HepG2 (cell line): ENCODE measurements at regions of chr18 and their contacts with region 1.

Region 1: DNA sequence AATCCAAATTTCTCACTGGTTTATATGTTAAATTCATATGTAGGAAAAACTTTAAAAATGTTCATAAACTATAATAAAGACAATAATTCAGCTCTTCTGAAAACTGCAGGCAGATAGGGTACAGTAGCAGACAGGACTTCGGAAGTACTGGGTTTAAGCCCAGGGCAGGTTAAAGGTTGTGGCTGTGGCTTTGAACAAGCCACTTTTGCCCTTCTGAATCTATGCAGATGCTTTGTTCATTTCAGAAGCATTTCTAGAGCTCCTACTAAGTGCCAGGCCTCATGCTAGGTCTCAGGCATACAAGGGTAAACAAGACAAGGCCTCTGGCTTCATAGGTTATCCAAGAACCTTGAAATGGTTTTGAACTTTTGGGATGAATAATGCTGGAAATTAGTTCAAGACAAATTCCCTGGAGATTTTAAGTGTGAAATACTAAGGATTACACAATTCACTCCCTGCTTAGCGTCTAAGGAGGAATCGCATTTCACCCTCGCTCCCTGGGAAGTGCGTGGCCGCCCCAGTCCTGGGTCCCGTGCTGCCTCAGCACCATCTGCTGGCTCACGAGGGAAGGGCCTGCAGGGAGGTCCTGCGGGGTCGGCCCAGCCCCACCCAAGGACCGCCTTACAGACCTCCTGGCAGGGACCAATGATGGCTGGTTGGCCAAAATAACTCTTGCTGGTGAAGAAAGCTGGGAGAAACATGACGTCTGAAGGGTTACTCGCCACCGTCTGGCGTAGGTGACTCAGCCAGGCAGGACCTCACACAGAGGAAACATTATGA is 67.7 kb upstream of the L3MBTL4 start:
- DNase-seq: peak; percentile 38
- ATAC-seq: peak; percentile 100
- H3K4me3 ChIP-seq: peak overlapping the region in 1 of 3 experiments; percentile 37; a peak in 2 of 6 replicates
- H3K27ac ChIP-seq: no peak overlapping the region
- H3K4me1 ChIP-seq: peaks cover 25% of the 10 kb centered on the region
- H3K27me3 ChIP-seq: peaks cover 0 to 12% of the 10 kb centered on the region in 2 experiments; a peak in 1 of 5 replicates
- CTCF ChIP-seq: peak; percentile 98
- EP300 ChIP-seq: no peak
- POLR2A ChIP-seq: no peak
- RAD21 ChIP-seq: peak; percentile 94

Region 2: GRCh38 chr18:5868218-5869115 is 613.9 kb before region 1 on chr18:
- CTCF ChIA-PET with region 1: interaction called, 5 read pairs
- POLR2A ChIA-PET with region 1: no interaction called
- in situ Hi-C with region 1: loop called (anchors 10 kb)
- intact Hi-C with region 1: loop called (anchors 1 kb)
- DNase-seq: peak; percentile 83
- ATAC-seq: peak; percentile 97
- H3K4me3 ChIP-seq: no peak overlapping the region
- H3K27ac ChIP-seq: no peak overlapping the region
- H3K4me1 ChIP-seq: no peaks in the 10 kb centered on the region
- H3K27me3 ChIP-seq: no peaks in the 10 kb centered on the region
- CTCF ChIP-seq: peak; percentile 84
- EP300 ChIP-seq: no peak
- POLR2A ChIP-seq: no peak
- RAD21 ChIP-seq: peak; percentile 82

Region 3: DNA sequence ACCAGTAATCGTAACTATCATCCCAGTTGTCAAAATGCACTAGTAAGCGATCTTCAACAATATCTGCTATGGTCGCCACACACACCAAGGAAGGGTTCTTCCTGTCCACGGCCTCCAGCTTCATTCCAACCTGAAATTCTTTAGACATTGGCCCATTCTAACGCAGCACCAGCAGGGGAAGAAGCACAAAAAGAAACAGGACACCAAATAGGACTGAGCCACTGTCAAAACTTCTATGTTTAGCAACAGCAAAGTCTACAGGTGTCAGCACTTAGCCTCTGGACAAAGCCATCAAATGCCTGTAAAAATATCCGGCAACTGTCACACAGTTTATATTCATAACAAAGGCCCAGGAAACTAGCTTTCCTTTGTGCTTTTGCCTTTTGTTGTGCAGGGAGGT is 242.7 kb before region 1 on chr18:
- CTCF ChIA-PET with region 1: no interaction called
- POLR2A ChIA-PET with region 1: no interaction called
- in situ Hi-C with region 1: no loop called
- intact Hi-C with region 1: loop called (anchors 5 kb)
- DNase-seq: no peak
- ATAC-seq: no peak
- H3K4me3 ChIP-seq: no peak overlapping the region
- H3K27ac ChIP-seq: no peak overlapping the region
- H3K4me1 ChIP-seq: no peaks in the 10 kb centered on the region
- H3K27me3 ChIP-seq: no peaks in the 10 kb centered on the region
- CTCF ChIP-seq: no peak
- EP300 ChIP-seq: no peak
- POLR2A ChIP-seq: no peak
- RAD21 ChIP-seq: no peak

Region 4: DNA sequence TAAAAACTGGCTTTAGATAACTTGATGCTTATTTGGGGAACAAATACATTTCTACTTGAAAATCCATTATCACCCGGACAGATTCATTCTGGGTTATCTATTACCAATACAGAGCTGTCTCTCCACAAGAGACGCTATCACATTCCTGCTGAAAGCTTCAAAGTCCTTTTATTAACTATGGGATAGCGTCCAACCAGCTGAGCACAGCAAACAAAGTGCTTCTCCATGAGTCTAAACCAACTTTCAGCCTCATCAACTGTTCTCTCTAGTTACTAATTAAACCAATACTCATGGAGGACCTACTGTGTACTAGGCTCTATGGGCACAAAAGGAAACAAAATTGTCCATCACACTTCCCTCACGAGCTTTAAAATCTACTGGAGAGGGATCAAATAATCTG is 200.5 kb before region 1 on chr18:
- CTCF ChIA-PET with region 1: no interaction called
- POLR2A ChIA-PET with region 1: no interaction called
- in situ Hi-C with region 1: no loop called
- intact Hi-C with region 1: loop called (anchors 1 kb)
- DNase-seq: peak; percentile 85
- ATAC-seq: peak; percentile 97
- H3K4me3 ChIP-seq: no peak overlapping the region
- H3K27ac ChIP-seq: peak overlapping the region; percentile 20
- H3K4me1 ChIP-seq: peaks cover 18% of the 10 kb centered on the region
- H3K27me3 ChIP-seq: no peaks in the 10 kb centered on the region
- CTCF ChIP-seq: peak; percentile 45
- EP300 ChIP-seq: 0 out of 4 replicates have a peak, but pooled peaks of 1 of the 2 experiments have one; percentile 10
- POLR2A ChIP-seq: no peak
- RAD21 ChIP-seq: no peak

Region 5: GRCh38 chr18:6495536-6495935 is 13.1 kb after region 1 on chr18:
- CTCF ChIA-PET with region 1: no interaction called
- POLR2A ChIA-PET with region 1: no interaction called
- in situ Hi-C with region 1: no loop called
- intact Hi-C with region 1: loop called (anchors 1 kb)
- DNase-seq: no peak
- ATAC-seq: no peak
- H3K4me3 ChIP-seq: no peak overlapping the region
- H3K27ac ChIP-seq: no peak overlapping the region
- H3K4me1 ChIP-seq: peaks cover 5% of the 10 kb centered on the region; the same call in 1 of the 2 replicates
- H3K27me3 ChIP-seq: peaks cover 0 to 4% of the 10 kb centered on the region in 2 experiments; a peak in 4 of 5 replicates
- CTCF ChIP-seq: no peak
- EP300 ChIP-seq: no peak
- POLR2A ChIP-seq: no peak
- RAD21 ChIP-seq: no peak